MCF 10A (cell line): ENCODE measurements at regions of chr2 and their contacts with region 1.

Region 1: DNA sequence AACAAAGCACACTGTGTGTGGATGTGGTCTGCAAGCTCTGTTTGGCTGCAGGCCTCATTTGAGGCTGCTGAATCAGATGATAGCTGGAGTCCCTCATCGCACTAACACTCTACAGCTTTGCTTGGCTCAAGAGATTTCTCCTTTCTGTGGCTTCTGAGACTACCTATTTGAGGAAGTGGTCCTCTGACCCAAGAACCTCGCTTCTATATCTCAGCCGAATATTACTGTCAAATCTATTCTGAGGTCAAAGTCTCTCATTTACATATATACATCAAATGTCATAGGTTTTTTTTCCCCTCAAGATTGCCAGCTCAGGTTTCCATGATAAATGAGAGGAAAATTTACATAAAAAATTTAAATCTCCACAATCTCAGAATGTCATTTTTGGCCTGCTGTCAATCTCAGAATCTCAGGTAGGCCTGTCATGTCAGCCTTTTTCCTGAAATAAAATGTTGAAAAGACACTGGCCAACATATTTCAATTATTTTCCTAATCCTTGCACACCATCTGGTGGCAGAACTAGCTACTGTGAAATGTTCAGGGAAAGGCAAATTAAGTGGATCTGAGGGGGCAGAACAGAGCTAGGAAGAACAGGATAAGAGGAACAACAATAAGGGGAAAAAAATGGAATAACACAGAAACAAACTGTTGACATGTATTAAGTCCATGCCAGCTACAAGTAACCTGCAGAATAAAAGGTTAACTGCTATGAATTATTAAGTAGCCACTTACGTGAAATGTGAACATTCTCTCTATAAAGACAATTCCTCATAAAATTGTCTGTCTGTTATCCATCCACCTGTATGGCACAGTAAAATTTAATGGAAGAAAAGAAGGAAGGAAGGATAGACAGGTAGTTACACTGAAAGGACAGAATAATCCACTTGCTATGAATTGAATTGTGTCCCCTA is 39.3 kb downstream of the AP1S3 start:
- DNase-seq: peak; percentile 73
- H3K4me3 Mint-ChIP-seq: no peak overlapping the region
- H3K27ac Mint-ChIP-seq: peak overlapping the region; percentile 81
- H3K4me1 Mint-ChIP-seq: peaks cover 30% of the 10 kb centered on the region
- H3K27me3 Mint-ChIP-seq: no peaks in the 10 kb centered on the region
- CTCF ChIP-seq: peak; percentile 58

Region 2: DNA sequence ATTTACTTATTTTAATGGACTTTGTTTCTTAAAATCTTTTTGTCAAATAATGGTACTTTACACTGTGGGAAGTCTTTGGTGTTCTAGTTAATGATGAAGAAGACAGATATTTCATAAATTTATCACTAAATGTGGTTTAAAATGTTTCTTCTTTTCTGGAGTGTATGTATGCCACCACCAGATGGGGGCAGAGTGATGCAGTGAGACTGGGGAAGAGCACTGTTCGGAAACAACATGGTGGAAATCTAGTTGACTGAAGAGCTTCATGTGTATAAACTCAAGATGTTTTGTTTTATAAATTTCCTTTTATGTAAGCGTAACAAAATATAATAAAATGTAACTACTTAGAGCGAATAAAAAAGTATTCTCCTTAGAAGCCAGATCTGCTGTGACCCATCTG is 550.9 kb before region 1 on chr2:
- CTCF ChIA-PET with region 1: interaction called, 5 read pairs
- POLR2A ChIA-PET with region 1: interaction called, 4 read pairs
- intact Hi-C with region 1: loop called (anchors 1 kb)
- DNase-seq: peak; percentile 34
- H3K4me3 Mint-ChIP-seq: no peak overlapping the region
- H3K27ac Mint-ChIP-seq: no peak overlapping the region
- H3K4me1 Mint-ChIP-seq: no peaks in the 10 kb centered on the region
- H3K27me3 Mint-ChIP-seq: no peaks in the 10 kb centered on the region
- CTCF ChIP-seq: peak; percentile 43

Region 3: DNA sequence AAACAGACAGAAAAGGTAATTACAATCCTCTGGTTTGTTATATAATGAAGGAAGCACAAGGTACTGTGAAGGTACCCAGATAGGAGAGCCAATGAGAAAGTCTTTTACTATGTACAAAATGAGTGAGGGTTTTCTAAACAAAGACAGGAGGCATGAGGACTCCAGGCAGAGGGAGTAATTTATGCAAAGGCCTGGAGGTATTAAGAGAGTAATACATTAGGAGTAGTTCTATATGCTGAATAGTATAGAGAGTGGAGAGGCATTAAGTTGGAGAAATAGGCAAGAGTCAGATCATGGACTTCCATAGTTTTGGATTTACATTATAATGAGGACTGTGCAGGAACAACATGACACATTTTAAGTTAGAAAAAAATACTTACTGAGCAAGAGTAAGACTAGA is 411.9 kb before region 1 on chr2:
- CTCF ChIA-PET with region 1: no interaction called
- POLR2A ChIA-PET with region 1: no interaction called
- intact Hi-C with region 1: no loop called
- DNase-seq: no peak
- H3K4me3 Mint-ChIP-seq: no peak overlapping the region
- H3K27ac Mint-ChIP-seq: no peak overlapping the region
- H3K4me1 Mint-ChIP-seq: no peaks in the 10 kb centered on the region
- H3K27me3 Mint-ChIP-seq: no peaks in the 10 kb centered on the region
- CTCF ChIP-seq: no peak

Region 4: DNA sequence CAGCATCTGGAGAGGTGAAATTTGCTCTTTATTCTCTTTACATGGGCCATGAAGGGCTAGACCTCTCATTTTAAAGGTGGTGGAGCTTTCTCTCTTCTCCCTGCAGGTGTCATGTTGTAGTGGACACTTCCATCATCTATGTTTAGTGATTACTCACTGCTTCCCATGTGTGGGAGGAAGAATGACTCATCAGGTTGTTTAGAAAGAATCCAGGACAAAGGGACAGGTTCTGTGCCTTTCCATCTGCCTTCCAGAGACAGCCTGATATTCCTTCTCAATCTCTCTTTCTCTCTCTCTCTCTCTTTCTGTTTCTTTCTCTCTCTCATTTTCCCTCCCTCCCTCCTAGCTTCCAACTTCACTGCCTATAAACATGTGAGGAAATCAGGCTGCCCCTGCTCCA is 234.6 kb before region 1 on chr2:
- CTCF ChIA-PET with region 1: no interaction called
- POLR2A ChIA-PET with region 1: no interaction called
- intact Hi-C with region 1: no loop called
- DNase-seq: peak; percentile 92
- H3K4me3 Mint-ChIP-seq: no peak overlapping the region
- H3K27ac Mint-ChIP-seq: peak overlapping the region; percentile 33
- H3K4me1 Mint-ChIP-seq: peaks cover 19% of the 10 kb centered on the region
- H3K27me3 Mint-ChIP-seq: no peaks in the 10 kb centered on the region
- CTCF ChIP-seq: no peak

Region 5: DNA sequence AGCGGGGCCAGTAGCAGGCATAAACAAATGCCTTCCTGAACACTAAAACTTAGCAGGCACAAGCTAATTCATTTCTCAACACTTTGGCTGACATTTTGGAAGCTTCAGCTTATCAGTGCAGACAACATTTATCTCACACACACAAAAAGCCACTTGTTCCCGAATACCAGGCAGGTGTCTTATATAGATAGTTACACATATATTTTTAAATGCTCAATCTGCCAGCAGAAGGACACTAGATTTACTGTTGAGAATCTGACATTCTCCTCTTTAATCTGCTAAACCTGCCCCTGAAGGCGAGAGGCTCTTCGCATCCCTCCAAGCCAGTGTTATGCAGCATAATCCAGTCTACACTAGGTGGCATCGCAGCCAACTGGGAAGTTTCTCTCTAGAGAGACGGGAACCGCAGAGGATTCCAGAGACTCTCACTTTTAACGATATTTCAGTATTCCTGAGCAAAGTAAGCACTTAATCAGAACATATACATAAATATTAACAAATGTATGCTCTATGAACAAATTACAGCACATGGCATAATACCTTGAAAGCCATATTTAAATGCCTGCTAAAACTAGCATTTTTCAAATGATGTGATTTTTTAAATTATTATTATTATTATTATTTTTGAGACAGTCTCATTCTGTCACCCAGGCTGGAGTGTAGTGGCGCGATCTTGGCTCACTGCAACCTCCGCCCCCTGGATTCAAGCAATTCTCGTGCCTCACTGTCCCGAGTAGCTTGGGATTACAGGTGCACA is 105.7 kb before region 1 on chr2:
- CTCF ChIA-PET with region 1: interaction called, 24 read pairs
- POLR2A ChIA-PET with region 1: interaction called, 4 read pairs
- intact Hi-C with region 1: loop called (anchors 1 kb)
- DNase-seq: peak; percentile 84
- H3K4me3 Mint-ChIP-seq: no peak overlapping the region
- H3K27ac Mint-ChIP-seq: no peak overlapping the region
- H3K4me1 Mint-ChIP-seq: peaks cover 16% of the 10 kb centered on the region
- H3K27me3 Mint-ChIP-seq: no peaks in the 10 kb centered on the region
- CTCF ChIP-seq: peak; percentile 50

Region 6: GRCh38 chr2:223779877-223780276 is 18.2 kb before region 1 on chr2:
- CTCF ChIA-PET with region 1: interaction called, 13 read pairs
- POLR2A ChIA-PET with region 1: interaction called, 4 read pairs
- intact Hi-C with region 1: no loop called
- DNase-seq: peak; percentile 66
- H3K4me3 Mint-ChIP-seq: no peak overlapping the region
- H3K27ac Mint-ChIP-seq: no peak overlapping the region
- H3K4me1 Mint-ChIP-seq: no peaks in the 10 kb centered on the region
- H3K27me3 Mint-ChIP-seq: no peaks in the 10 kb centered on the region
- CTCF ChIP-seq: peak; percentile 41

Region 7: GRCh38 chr2:223837287-223838061 is 39.4 kb after region 1 on chr2 and contains the start of gene AP1S3:
- CTCF ChIA-PET with region 1: interaction called, 20 read pairs
- POLR2A ChIA-PET with region 1: interaction called, 17 read pairs
- intact Hi-C with region 1: no loop called
- DNase-seq: peak; percentile 83
- H3K4me3 Mint-ChIP-seq: peak within 1 kb of the TSS; percentile 95
- H3K27ac Mint-ChIP-seq: peak within 1 kb of the TSS; percentile 63
- H3K4me1 Mint-ChIP-seq: peaks cover 22% of the 10 kb centered on the region
- H3K27me3 Mint-ChIP-seq: no peaks in the 10 kb centered on the region
- CTCF ChIP-seq: no peak
- total RNA-seq, gene AP1S3: 56.9 and 57.7 TPM in 2 replicates

Region 8: DNA sequence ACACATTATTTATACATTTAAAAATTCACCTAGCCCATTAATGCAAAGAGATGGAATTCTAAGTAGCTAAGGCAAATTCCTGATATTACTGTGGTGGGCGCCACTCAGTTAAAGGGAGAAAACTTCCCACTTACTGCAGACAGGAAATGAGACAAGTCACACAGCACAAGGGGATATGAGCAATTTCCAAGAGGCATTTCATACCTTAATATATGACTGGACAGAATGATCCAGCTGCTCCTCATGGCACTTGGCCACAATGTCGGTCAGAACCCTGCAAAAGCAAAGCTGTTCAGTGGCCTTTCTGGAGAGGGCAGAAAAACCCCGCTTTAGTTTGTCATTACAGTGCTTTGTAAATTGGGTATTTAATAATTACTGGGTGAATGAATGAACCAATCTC is 1039.5 kb after region 1 on chr2:
- CTCF ChIA-PET with region 1: no interaction called
- POLR2A ChIA-PET with region 1: no interaction called
- intact Hi-C with region 1: no loop called
- DNase-seq: peak; percentile 75
- H3K4me3 Mint-ChIP-seq: no peak overlapping the region
- H3K27ac Mint-ChIP-seq: peak overlapping the region; percentile 4
- H3K4me1 Mint-ChIP-seq: peaks cover 28% of the 10 kb centered on the region
- H3K27me3 Mint-ChIP-seq: no peaks in the 10 kb centered on the region
- CTCF ChIP-seq: no peak